ENCODE measurements at regions of chr13 and their contacts with region 1.

Region 1: DNA sequence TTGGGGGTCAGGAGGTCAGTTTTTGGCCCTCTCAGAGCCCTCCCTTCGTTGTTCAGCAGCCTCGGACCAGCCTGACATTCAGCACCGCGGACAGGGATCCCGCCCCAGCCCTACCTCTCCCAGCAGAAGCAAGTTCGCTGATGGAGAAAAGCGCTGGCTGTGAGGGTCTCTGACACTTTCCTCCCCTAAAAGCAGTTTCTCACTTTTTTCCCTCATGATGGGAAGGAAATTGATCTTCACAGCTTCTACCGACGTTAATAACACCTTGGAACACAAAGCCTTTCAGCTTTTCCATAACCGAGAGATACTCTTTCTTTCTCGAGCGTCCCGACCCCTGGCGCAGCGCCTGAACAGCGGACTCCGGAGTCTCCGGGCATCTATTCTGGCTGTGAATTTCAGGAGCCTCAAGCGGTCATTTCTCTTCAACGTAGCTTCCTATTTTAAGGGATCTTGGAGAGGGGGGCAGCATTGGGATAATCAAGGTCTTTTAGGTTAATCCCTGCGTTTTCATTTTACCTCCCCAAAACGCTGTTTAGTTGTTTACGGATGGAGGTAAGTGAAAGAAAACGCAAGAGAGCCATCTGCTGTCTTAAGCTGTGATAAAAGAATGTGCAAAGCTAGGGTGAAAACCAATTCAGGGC is 467.2 kb downstream of the ITGBL1 start:
- H3K4me3 ChIP-seq: peak overlapping the region; percentile 2
- H3K27ac ChIP-seq: no peak overlapping the region
- H3K4me1 ChIP-seq: no peaks in the 10 kb centered on the region
- CTCF ChIP-seq: no peak

Region 2: DNA sequence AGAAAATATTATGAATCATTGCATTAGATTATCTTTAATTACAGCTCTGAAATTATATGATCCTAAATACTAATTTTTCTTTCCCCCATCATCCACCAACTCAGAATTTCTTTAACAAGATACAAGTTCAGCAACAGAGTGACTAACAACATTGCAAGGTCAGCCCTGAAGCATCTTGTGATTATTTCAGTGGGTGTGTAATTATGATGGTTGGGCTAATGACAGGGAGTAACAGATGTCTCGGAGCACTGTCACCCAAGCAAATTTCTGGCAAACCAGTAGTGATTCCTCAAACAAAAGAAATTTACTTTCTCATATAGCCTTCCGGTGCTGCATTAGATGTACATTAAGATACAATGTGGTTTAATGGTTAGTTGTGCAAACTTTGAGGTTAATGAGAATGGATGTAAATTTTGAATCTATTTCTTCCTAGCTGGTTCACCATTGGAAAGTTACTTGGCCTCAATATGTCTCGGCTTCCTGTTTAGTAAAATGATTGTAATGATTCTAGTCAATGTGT is 228.3 kb before region 1 on chr13:
- CTCF ChIA-PET with region 1: no interaction called
- POLR2A ChIA-PET with region 1: no interaction called
- H3K4me3 ChIP-seq: no peak overlapping the region
- H3K27ac ChIP-seq: no peak overlapping the region
- H3K4me1 ChIP-seq: no peaks in the 10 kb centered on the region
- CTCF ChIP-seq: no peak

Region 3: GRCh38 chr13:101785858-101786257 is 133.8 kb before region 1 on chr13:
- CTCF ChIA-PET with region 1: interaction called, 29 read pairs
- POLR2A ChIA-PET with region 1: no interaction called
- H3K4me3 ChIP-seq: no peak overlapping the region
- H3K27ac ChIP-seq: no peak overlapping the region
- H3K4me1 ChIP-seq: no peaks in the 10 kb centered on the region
- CTCF ChIP-seq: no peak

Region 4: DNA sequence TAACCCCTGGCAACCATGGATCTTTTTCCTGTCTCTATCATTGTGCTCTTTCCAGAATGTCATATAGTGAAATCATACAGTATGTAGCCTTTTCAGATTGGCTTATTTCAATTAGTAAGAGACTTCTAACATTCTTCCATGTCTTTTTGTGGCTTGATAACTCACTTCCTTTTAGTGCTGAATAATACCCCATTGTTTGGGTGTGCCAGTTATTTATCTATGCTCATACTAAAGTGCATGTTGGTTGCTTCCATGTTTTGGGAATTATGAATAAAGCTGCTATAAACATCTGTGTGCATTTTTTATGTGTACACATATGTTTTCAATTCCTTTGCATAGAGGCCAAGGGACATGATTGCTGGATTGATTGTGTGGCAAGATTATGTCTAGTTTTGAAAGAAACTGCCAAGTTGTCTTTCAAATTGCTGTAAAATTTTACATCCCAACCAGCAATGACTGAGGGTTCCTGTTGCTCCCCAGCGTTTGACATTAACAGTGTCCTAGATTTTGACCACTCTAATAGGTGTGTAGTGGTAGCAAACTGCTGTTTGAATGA is 108.3 kb before region 1 on chr13:
- CTCF ChIA-PET with region 1: no interaction called
- POLR2A ChIA-PET with region 1: no interaction called
- H3K4me3 ChIP-seq: no peak overlapping the region
- H3K27ac ChIP-seq: no peak overlapping the region
- H3K4me1 ChIP-seq: no peaks in the 10 kb centered on the region
- CTCF ChIP-seq: no peak

Region 5: DNA sequence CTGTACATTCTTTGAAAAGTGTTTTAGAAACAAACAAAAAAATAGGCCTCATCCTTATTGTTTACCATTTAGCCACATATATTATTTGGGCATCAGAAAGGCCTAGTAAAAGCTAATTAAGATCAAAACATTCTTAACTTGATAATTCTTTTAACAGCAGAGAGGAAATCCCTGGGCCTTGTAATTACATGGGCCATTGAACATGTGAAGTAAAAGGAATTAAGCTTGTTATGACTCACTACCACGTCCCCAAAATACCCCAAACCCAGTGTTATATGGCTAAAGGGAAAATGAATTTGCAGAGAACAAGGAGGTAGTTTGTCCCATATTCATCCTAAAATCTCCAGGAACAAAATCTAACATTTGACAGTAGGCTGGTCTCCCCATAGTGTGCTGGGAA is 27.4 kb before region 1 on chr13:
- CTCF ChIA-PET with region 1: no interaction called
- POLR2A ChIA-PET with region 1: no interaction called
- H3K4me3 ChIP-seq: no peak overlapping the region
- H3K27ac ChIP-seq: no peak overlapping the region
- H3K4me1 ChIP-seq: no peaks in the 10 kb centered on the region
- CTCF ChIP-seq: no peak

Region 6: GRCh38 chr13:102141625-102142472 is 222.2 kb after region 1 on chr13:
- CTCF ChIA-PET with region 1: no interaction called
- POLR2A ChIA-PET with region 1: no interaction called
- H3K4me3 ChIP-seq: no peak overlapping the region
- H3K27ac ChIP-seq: no peak overlapping the region
- H3K4me1 ChIP-seq: no peaks in the 10 kb centered on the region
- CTCF ChIP-seq: no peak

Measured in HEK293 (cell line).